Mammary epithelial cell (primary cell): ENCODE measurements at regions of chr12 and their contacts with region 1.

Region 1: GRCh38 chr12:105382771-105383622 is 52.5 kb downstream of the C12orf75 start:
- DNase-seq: peak; percentile 47
- H3K4me3 ChIP-seq: no peak overlapping the region
- H3K27ac ChIP-seq: no peak overlapping the region
- H3K4me1 ChIP-seq: peaks cover 20% of the 10 kb centered on the region
- H3K27me3 ChIP-seq: no peaks in the 10 kb centered on the region
- CTCF ChIP-seq: peak; percentile 75 to 82

Region 2: DNA sequence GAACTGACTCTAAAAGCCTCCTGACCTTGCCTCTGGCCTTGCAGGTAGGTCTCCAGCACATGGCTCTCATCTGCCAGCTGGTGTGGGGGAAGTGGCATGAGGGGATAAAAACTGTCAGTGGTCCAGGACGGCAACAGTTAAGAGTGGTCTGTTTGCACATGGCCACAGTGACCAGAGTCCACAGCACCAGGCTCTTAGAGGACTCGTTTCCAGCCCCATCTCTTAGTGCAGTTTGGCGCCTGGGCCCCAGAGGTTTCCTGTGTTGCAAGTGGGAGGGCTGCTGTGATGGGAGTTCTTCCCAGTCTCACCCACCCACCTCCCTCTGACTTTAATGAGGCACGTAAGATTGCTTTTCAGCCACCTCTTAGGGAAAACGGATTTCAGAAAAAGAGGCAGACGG is 184.0 kb before region 1 on chr12:
- CTCF ChIA-PET with region 1: no interaction called
- dilution Hi-C with region 1: no loop called
- in situ Hi-C with region 1: no loop called
- intact Hi-C with region 1: loop called (anchors 5 kb)
- DNase-seq: no peak
- H3K4me3 ChIP-seq: no peak overlapping the region
- H3K27ac ChIP-seq: peak overlapping the region; percentile 8
- H3K4me1 ChIP-seq: peaks cover 19% of the 10 kb centered on the region
- H3K27me3 ChIP-seq: no peaks in the 10 kb centered on the region
- CTCF ChIP-seq: no peak

Region 3: DNA sequence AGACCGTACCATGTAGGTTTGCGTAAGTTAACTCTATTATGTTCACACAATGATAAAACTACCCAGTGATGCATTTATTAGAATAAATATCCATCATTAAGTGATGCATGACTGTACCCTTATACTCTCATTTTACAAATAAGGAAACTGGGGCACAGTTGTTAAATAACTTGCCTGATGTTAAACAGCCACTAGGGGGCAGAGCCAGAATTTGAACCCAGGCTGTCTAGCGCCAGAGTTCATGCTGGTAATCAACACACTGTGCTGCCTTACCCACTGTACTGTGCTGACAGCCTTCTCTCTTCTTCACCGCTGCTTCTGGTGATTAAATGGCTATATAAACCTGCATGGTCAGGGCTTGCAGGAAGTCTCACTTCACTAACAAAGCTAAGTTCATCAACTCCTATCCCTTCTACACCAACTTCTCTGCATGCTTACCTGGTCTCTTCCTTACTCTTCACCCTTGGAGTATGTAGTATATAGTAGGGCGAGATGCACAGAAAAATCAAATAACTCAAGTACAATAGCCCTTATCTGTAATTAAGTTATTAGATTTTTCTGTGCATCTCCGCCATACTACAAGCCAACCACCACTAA is 103.4 kb before region 1 on chr12:
- CTCF ChIA-PET with region 1: no interaction called
- dilution Hi-C with region 1: no loop called
- in situ Hi-C with region 1: no loop called
- intact Hi-C with region 1: loop called (anchors 2 kb)
- DNase-seq: no peak
- H3K4me3 ChIP-seq: no peak overlapping the region
- H3K27ac ChIP-seq: no peak overlapping the region
- H3K4me1 ChIP-seq: peaks cover 7% of the 10 kb centered on the region
- H3K27me3 ChIP-seq: no peaks in the 10 kb centered on the region
- CTCF ChIP-seq: peak; percentile 47 to 64